ENCODE measurements at regions of chr14 and their contacts with region 1.

Region 1: GRCh38 chr14:50736932-50737419 is 68.9 kb upstream of the SAV1 start:
- DNase-seq: peak; percentile 74
- H3K4me3 Mint-ChIP-seq: peak overlapping the region; percentile 45
- H3K27ac Mint-ChIP-seq: peak overlapping the region; percentile 73
- H3K4me1 Mint-ChIP-seq: peaks cover 34% of the 10 kb centered on the region
- H3K27me3 Mint-ChIP-seq: no peaks in the 10 kb centered on the region

Region 2: DNA sequence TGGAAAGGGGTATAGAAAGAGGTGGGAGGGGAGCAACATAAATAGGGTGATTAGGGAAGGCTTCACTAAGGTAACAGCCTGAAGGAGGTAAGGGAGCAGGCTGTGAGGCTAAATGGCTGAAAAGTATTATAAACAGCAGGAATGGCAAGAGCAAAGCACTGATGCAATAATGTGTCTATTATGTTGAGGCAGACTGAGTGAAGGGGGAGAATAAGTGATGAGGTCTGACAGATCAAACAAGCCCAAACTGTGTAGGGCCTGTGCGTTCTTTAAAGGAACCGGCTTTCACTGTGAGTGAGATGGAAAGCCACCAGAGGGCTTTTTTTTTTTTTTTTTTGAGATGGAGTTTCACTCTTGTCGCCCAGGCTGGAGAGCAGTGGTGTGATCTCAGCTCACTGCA is 613.9 kb before region 1 on chr14:
- intact Hi-C with region 1: no loop called
- DNase-seq: no peak
- H3K4me3 Mint-ChIP-seq: no peak overlapping the region
- H3K27ac Mint-ChIP-seq: no peak overlapping the region
- H3K4me1 Mint-ChIP-seq: no peaks in the 10 kb centered on the region
- H3K27me3 Mint-ChIP-seq: no peaks in the 10 kb centered on the region

Region 3: GRCh38 chr14:50704454-50705010 is 32.4 kb before region 1 on chr14:
- intact Hi-C with region 1: no loop called
- DNase-seq: no peak
- H3K4me3 Mint-ChIP-seq: no peak overlapping the region
- H3K27ac Mint-ChIP-seq: no peak overlapping the region
- H3K4me1 Mint-ChIP-seq: no peaks in the 10 kb centered on the region
- H3K27me3 Mint-ChIP-seq: peaks cover 13% of the 10 kb centered on the region

Region 4: DNA sequence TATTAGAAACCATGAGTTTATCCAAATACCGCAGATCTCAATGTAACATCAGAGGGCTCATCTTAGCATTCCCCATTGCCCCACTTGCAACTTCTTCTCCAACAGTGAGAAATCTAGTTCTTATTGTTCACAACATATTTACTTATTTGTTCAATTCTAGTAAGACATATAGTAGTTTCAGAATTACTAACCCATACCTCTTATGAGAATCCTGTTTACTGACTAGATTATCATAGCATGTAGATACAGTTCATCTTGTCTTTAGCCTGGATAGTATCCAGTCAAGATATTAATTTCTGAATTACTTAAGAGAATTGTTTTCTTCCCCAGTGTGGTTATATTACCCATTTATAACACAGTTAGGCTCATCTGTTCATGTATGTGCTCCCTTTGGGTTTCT is 13.3 kb after region 1 on chr14:
- intact Hi-C with region 1: loop called (anchors 1 kb)
- DNase-seq: no peak
- H3K4me3 Mint-ChIP-seq: no peak overlapping the region
- H3K27ac Mint-ChIP-seq: peak overlapping the region; percentile 4
- H3K4me1 Mint-ChIP-seq: peaks cover 22% of the 10 kb centered on the region
- H3K27me3 Mint-ChIP-seq: no peaks in the 10 kb centered on the region

Region 5: DNA sequence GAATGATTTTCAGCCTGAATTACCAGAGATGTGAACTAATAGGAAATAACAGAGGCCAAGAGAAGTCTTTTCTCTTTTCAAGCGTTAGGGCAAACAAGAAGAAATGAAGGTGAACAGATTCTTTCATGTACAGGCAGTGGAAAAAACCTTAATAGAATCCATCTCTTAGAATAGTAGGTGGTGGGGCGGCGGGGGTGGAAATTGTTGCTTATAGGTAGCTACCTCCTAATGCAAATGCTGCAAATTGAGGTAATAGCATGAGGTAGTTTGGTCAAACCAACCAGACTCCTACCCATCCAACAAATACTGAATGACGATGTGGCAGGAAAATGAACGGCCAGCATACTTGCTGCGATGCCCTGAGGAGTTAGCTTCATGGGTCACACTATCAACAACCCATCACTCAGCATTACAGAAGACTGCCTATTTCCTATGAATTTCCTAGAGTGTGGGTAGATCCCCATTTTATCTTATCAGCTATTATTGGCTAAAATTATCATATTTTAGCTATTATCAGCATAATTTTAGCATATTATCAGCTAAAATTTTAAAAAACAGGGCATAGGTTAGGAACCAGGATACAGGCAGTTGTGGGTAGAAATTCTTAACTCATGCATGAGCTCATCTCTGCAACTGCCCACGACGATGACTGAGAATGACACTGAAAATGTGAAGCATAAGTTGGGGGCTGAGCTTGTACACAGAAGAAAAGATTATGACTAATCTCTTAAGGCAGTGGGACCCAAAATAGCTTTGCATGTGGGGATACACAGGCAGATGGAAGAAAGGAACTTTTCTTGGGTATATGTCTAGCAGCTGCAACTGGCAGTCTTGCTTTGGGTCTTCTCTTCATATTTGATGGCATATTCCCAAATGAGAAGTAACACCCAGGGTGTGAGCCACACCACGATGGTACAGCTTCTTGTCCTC is 25.3 kb after region 1 on chr14:
- intact Hi-C with region 1: loop called (anchors 1 kb)
- DNase-seq: no peak
- H3K4me3 Mint-ChIP-seq: no peak overlapping the region
- H3K27ac Mint-ChIP-seq: peak overlapping the region; percentile 72
- H3K4me1 Mint-ChIP-seq: peaks cover 23% of the 10 kb centered on the region
- H3K27me3 Mint-ChIP-seq: no peaks in the 10 kb centered on the region

Region 6: DNA sequence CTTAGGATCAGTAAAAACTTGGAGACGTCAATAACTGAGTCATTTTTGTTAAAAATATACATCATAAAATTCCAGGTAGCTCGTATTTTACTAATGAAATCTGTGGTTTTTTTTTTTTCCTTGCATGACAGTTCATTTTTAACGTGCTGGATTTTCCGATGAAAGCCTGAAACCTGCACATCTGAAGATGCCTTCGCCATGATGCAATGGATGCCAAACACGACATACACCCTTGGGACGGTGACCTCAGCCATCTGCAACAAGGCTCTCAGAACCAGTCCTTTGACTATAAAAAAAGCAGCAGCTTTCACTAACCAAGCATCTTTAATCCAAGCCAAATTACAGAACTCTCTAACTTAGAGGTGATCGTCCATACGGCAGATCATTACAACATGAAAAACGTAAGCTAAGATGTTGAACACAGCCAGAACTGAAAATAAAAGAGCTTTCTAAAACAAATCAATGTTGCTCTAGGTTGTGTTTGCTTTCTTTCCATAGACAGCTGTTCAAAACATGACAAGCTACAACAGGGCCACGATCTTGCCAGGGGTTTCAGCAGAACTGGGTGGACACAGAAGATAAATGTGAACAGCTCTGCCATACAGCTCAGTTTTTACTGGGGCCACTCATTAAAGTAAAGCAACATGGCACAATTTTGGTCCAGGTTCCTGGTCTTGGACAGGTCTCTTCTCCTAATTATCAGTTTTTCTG is 86.2 kb after region 1 on chr14:
- intact Hi-C with region 1: no loop called
- DNase-seq: no peak
- H3K4me3 Mint-ChIP-seq: peak overlapping the region; percentile 77
- H3K27ac Mint-ChIP-seq: peak overlapping the region; percentile 87
- H3K4me1 Mint-ChIP-seq: peaks cover 64% of the 10 kb centered on the region
- H3K27me3 Mint-ChIP-seq: no peaks in the 10 kb centered on the region

Measured in activated CD4-positive, alpha-beta T cell treated with anti-CD3 and anti-CD28 coated beads, Interleukin-2, amount 10 ng/mL, durations not matched to agents 24 days and 14 days (primary cell).